Transverse colon (tissue), 4 donors: ENCODE measurements at regions of chr11 and their contacts with region 1.

Region 1: DNA sequence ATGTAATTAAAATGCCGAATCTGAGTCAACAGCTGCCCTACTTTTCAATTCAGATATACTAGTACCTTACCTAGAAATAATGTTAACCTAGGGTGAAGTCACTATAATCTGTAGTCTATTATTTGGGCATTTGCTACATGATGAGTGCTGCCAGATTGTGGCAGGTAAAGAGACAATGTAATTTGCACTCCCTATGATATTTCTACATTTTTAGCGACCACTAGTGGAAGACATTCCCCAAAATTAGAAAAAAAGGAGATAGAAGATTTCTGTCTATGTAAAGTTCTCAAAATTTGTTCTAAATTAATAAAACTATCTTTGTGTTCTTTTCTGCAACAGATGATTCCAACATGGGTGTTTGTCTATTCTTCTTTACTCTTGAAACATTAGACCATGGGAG is 14.1 kb downstream of the MS4A1 start:
- DNase-seq: no peak
- H3K4me3 ChIP-seq: no peak overlapping the region
- H3K27ac ChIP-seq: no peak overlapping the region
- H3K4me1 ChIP-seq: no peaks in the 10 kb centered on the region
- H3K27me3 ChIP-seq: no peaks in the 10 kb centered on the region
- CTCF ChIP-seq: no peak
- EP300 ChIP-seq: no peak
- POLR2A ChIP-seq: no peak

Region 2: DNA sequence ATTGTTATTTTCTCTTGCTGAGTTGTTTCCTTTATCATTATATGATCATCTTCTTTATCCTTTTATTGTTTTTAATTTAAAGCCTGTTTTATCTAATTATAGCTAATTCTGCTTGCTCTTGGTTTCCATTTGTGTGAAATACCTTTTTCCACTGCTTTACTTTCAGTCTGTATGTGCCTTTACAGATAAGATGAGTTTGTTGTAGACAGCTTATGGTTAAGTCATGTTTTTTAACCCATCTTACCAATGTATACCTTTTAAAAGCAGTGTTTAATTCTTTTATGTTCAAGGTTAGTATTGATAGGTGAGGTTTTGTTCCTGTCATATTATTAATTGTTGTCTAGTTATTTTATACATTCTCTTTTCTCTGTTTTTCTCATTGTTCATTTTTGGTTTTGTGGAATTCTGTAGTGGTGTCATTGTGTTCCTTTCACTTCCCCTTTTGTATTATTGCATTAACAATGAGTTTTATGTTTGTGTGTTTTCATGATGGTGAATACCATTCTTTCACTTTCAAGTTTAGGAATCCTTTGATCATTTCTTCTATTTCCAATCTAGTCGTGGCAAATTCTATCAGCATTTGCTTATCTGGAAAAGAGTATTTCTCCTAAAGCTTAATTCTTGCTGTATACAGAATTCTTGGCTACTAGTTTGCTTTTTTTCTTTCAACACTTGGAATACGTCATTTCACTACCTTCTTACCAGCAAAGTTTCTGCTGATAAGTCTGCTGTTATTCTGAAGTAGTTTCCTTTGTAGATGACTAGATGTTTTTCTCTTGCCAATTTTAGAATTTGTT is 1089.3 kb before region 1 on chr11:
- in situ Hi-C with region 1: no loop called
- intact Hi-C with region 1: loop called (anchors 5 kb)
- DNase-seq: no peak
- H3K4me3 ChIP-seq: no peak overlapping the region
- H3K27ac ChIP-seq: no peak overlapping the region
- H3K4me1 ChIP-seq: no peaks in the 10 kb centered on the region
- H3K27me3 ChIP-seq: no peaks in the 10 kb centered on the region
- CTCF ChIP-seq: no peak
- EP300 ChIP-seq: no peak
- POLR2A ChIP-seq: no peak